Activated CD4-positive, alpha-beta T cell treated with anti-CD3 and anti-CD28 coated beads, Interleukin-2, amount 10 ng/mL, durations not matched to agents 24 days and 14 days (primary cell): ENCODE measurements at regions of chr15 and their contacts with region 1.

Region 1: GRCh38 chr15:60548101-60548500 is 69.2 kb upstream of the ICE2 start:
- DNase-seq: peak; percentile 87
- H3K4me3 Mint-ChIP-seq: peak overlapping the region; percentile 74
- H3K27ac Mint-ChIP-seq: peak overlapping the region; percentile 94
- H3K4me1 Mint-ChIP-seq: peaks cover 72% of the 10 kb centered on the region
- H3K27me3 Mint-ChIP-seq: no peaks in the 10 kb centered on the region

Region 2: GRCh38 chr15:60397772-60398445 is 150.2 kb before region 1 on chr15 and contains the start of gene ANXA2:
- intact Hi-C with region 1: loop called (anchors 2 kb)
- DNase-seq: peak; percentile 94
- H3K4me3 Mint-ChIP-seq: peak within 1 kb of the TSS; percentile 92
- H3K27ac Mint-ChIP-seq: peak within 1 kb of the TSS; percentile 94
- H3K4me1 Mint-ChIP-seq: peaks cover 51% of the 10 kb centered on the region
- H3K27me3 Mint-ChIP-seq: peaks cover 4% of the 10 kb centered on the region
- total RNA-seq, gene ANXA2: 214 and 225 TPM in 2 replicates

Region 3: GRCh38 chr15:60507596-60508424 is 40.3 kb before region 1 on chr15:
- intact Hi-C with region 1: loop called (anchors 2 kb)
- DNase-seq: peak; percentile 88
- H3K4me3 Mint-ChIP-seq: peak overlapping the region; percentile 15
- H3K27ac Mint-ChIP-seq: peak overlapping the region; percentile 62
- H3K4me1 Mint-ChIP-seq: peaks cover 29% of the 10 kb centered on the region
- H3K27me3 Mint-ChIP-seq: no peaks in the 10 kb centered on the region

Region 4: GRCh38 chr15:60580650-60581376 is 32.7 kb after region 1 on chr15:
- intact Hi-C with region 1: loop called (anchors 1 kb)
- DNase-seq: peak; percentile 88
- H3K4me3 Mint-ChIP-seq: peak overlapping the region; percentile 73
- H3K27ac Mint-ChIP-seq: peak overlapping the region; percentile 94
- H3K4me1 Mint-ChIP-seq: peaks cover 71% of the 10 kb centered on the region
- H3K27me3 Mint-ChIP-seq: no peaks in the 10 kb centered on the region

Region 5: GRCh38 chr15:60695713-60696522 is 147.8 kb after region 1 on chr15:
- intact Hi-C with region 1: loop called (anchors 5 kb)
- DNase-seq: peak; percentile 81
- H3K4me3 Mint-ChIP-seq: peak overlapping the region; percentile 66
- H3K27ac Mint-ChIP-seq: peak overlapping the region; percentile 79
- H3K4me1 Mint-ChIP-seq: peaks cover 42% of the 10 kb centered on the region
- H3K27me3 Mint-ChIP-seq: no peaks in the 10 kb centered on the region

Region 6: GRCh38 chr15:60766391-60767128 is 218.5 kb after region 1 on chr15:
- intact Hi-C with region 1: no loop called
- DNase-seq: no peak
- H3K4me3 Mint-ChIP-seq: no peak overlapping the region
- H3K27ac Mint-ChIP-seq: no peak overlapping the region
- H3K4me1 Mint-ChIP-seq: peaks cover 22% of the 10 kb centered on the region
- H3K27me3 Mint-ChIP-seq: no peaks in the 10 kb centered on the region